Stomach (tissue), 19 donors: ENCODE measurements at regions of chr11 and their contacts with region 1.

Region 1: GRCh38 chr11:114243461-114244372 is 52.5 kb upstream of the NNMT start:
- DNase-seq: peak in 1 of 2 donors; percentile 75
- H3K4me3 ChIP-seq: no peak overlapping the region
- H3K27ac ChIP-seq: no peak overlapping the region
- H3K4me1 ChIP-seq: peaks cover 9 to 31% (median 12%) of the 10 kb centered on the region in 4 donors
- H3K27me3 ChIP-seq: no peaks in the 10 kb centered on the region
- CTCF ChIP-seq: no peak
- EP300 ChIP-seq: no peak
- POLR2A ChIP-seq: no peak

Region 2: DNA sequence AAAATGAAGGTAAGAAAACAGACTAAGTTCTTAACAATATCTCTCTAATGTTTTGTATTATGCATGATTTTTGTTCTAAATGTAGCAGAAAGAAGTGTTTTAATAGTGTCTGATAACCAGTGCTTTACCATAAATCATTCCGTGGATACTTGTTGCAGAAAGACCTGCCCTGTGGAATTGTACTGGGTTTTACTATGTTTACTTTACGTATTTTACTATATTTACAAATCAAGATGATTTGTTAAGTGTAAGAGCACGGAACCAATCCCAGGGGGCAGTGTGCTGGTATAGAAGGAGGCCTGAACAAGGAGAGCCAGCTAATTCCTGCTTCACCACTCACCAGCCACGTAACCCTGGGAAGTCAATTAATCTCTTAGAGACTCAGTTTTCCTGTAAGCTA is 337.7 kb before region 1 on chr11:
- intact Hi-C with region 1: loop called (anchors 10 kb)
- DNase-seq: peak; percentile 30 to 81
- H3K4me3 ChIP-seq: no peak overlapping the region
- H3K27ac ChIP-seq: peak overlapping the region in 3 of 5 donors; percentile 36 to 62 (median 56)
- H3K4me1 ChIP-seq: peaks cover 0 to 14% (median 10%) of the 10 kb centered on the region in 4 donors
- H3K27me3 ChIP-seq: no peaks in the 10 kb centered on the region
- CTCF ChIP-seq: peak in 1 of 7 experiments; percentile 17
- EP300 ChIP-seq: no peak
- POLR2A ChIP-seq: no peak

Region 3: DNA sequence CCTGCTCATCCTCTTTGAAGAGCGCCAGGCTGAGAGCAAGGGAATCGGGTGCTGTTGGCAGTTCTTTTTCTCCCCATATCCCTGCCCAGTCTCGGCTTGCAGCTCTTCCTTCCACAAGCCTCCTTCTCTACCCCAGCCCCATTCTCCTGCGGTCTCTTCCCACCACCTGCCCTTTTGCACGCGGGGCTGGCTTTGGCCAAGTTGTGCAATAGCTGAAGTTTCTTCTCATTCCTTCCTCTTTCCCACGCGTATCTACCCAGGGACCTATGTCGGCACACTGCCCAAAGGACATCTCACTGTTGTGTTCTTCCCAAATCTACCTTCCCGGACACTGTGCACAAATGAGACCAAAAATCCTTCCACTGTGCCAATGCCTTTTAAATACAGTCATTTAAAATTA is 291.1 kb before region 1 on chr11:
- intact Hi-C with region 1: no loop called
- DNase-seq: no peak
- H3K4me3 ChIP-seq: no peak overlapping the region
- H3K27ac ChIP-seq: no peak overlapping the region
- H3K4me1 ChIP-seq: no peaks in the 10 kb centered on the region
- H3K27me3 ChIP-seq: peaks cover 0 to 41% (median 3%) of the 10 kb centered on the region in 3 donors
- CTCF ChIP-seq: no peak
- EP300 ChIP-seq: no peak
- POLR2A ChIP-seq: no peak

Region 4: GRCh38 chr11:114066046-114066648 is 177.6 kb before region 1 on chr11:
- intact Hi-C with region 1: no loop called
- DNase-seq: no peak
- H3K4me3 ChIP-seq: peak overlapping the region; percentile 93 to 97 (median 96)
- H3K27ac ChIP-seq: peak overlapping the region in 1 of 5 donors; percentile 99
- H3K4me1 ChIP-seq: peaks cover 58 to 94% (median 77%) of the 10 kb centered on the region in 4 donors
- H3K27me3 ChIP-seq: no peaks in the 10 kb centered on the region
- CTCF ChIP-seq: no peak
- EP300 ChIP-seq: no peak
- POLR2A ChIP-seq: no peak

Region 5: GRCh38 chr11:114110952-114111947 is 132.5 kb before region 1 on chr11:
- intact Hi-C with region 1: no loop called
- DNase-seq: peak; percentile 40 to 44
- H3K4me3 ChIP-seq: peak overlapping the region in 1 of 4 donors; percentile 20
- H3K27ac ChIP-seq: peak overlapping the region in 4 of 5 donors; percentile 59 to 74 (median 66)
- H3K4me1 ChIP-seq: peaks cover 53 to 100% (median 90%) of the 10 kb centered on the region in 4 donors
- H3K27me3 ChIP-seq: no peaks in the 10 kb centered on the region
- CTCF ChIP-seq: no peak
- EP300 ChIP-seq: peak; percentile 30
- POLR2A ChIP-seq: no peak